A549 (cell line): ENCODE measurements at regions of chr7 and their contacts with region 1.

Region 1: GRCh38 chr7:149662591-149663095 is 110.7 kb downstream of the ZNF467 start:
- DNase-seq: peak; percentile 33 to 83
- ATAC-seq: peak; percentile 96 to 99
- H3K4me3 ChIP-seq: no peak overlapping the region
- H3K27ac ChIP-seq: no peak overlapping the region
- H3K4me1 ChIP-seq: 0 out of 3 replicates have a peak, but pooled peaks cover 2% of the 10 kb centered on the region
- CTCF ChIP-seq: peak; percentile 53
- EP300 ChIP-seq: no peak
- POLR2A ChIP-seq: no peak
- RAD21 ChIP-seq: peak; percentile 64 to 79

Region 2: DNA sequence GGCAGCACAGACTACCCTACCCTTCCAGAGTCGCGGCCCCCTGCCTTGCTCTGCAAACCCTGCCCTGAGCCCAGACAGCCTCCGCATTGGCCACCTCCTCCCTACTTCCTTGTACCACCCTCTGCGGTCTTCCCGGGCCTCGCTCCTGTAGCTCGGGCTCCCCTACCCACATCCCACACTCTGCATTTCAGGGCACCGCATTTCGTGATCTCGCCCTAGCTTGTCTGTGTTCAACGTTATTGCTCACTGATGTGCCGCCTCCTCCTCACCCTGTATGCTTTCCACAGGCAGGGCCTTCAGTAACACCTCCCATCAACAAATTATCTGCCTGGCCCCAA is 640.9 kb before region 1 on chr7:
- CTCF ChIA-PET with region 1: no interaction called
- POLR2A ChIA-PET with region 1: no interaction called
- DNase-seq: no peak
- ATAC-seq: no peak
- H3K4me3 ChIP-seq: no peak overlapping the region
- H3K27ac ChIP-seq: no peak overlapping the region
- H3K4me1 ChIP-seq: peaks cover 6% of the 10 kb centered on the region
- CTCF ChIP-seq: no peak
- EP300 ChIP-seq: no peak
- POLR2A ChIP-seq: no peak
- RAD21 ChIP-seq: no peak

Region 3: GRCh38 chr7:149624419-149625339 is 38.0 kb before region 1 on chr7:
- CTCF ChIA-PET with region 1: interaction called, 12 read pairs
- POLR2A ChIA-PET with region 1: no interaction called
- DNase-seq: peak; percentile 74 to 94
- ATAC-seq: peak; percentile 93 to 97
- H3K4me3 ChIP-seq: peak overlapping the region; percentile 98
- H3K27ac ChIP-seq: peak overlapping the region; percentile 94 to 97
- H3K4me1 ChIP-seq: peaks cover 12% of the 10 kb centered on the region
- CTCF ChIP-seq: peak; percentile 81
- EP300 ChIP-seq: no peak
- POLR2A ChIP-seq: peak; percentile 78
- RAD21 ChIP-seq: no peak; a peak in 1 of 5 replicates

Region 4: DNA sequence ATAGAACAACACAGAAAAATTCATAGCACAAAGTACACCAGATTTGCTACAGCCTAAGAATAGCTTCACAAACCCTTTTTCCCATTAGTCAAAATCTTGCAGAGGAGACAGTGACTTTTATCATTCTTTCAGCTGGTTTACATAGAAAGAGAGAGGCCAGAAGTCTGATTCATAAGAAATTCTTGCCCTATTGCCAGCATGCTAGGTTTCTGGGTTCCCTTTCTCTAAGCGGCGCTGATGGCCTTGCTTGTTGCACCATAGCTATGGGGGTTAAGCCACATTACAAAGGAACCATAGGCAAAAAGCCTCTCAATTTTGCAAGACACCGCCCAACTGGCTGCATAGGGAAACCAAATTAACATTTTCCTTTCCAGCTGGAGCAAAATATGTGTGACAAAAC is 23.4 kb after region 1 on chr7:
- CTCF ChIA-PET with region 1: interaction called, 27 read pairs
- POLR2A ChIA-PET with region 1: no interaction called
- DNase-seq: no peak
- ATAC-seq: no peak
- H3K4me3 ChIP-seq: no peak overlapping the region
- H3K27ac ChIP-seq: no peak overlapping the region
- H3K4me1 ChIP-seq: peaks cover 6% of the 10 kb centered on the region; the same call in 2 of the 3 replicates
- CTCF ChIP-seq: no peak
- EP300 ChIP-seq: no peak
- POLR2A ChIP-seq: no peak
- RAD21 ChIP-seq: no peak

Region 5: DNA sequence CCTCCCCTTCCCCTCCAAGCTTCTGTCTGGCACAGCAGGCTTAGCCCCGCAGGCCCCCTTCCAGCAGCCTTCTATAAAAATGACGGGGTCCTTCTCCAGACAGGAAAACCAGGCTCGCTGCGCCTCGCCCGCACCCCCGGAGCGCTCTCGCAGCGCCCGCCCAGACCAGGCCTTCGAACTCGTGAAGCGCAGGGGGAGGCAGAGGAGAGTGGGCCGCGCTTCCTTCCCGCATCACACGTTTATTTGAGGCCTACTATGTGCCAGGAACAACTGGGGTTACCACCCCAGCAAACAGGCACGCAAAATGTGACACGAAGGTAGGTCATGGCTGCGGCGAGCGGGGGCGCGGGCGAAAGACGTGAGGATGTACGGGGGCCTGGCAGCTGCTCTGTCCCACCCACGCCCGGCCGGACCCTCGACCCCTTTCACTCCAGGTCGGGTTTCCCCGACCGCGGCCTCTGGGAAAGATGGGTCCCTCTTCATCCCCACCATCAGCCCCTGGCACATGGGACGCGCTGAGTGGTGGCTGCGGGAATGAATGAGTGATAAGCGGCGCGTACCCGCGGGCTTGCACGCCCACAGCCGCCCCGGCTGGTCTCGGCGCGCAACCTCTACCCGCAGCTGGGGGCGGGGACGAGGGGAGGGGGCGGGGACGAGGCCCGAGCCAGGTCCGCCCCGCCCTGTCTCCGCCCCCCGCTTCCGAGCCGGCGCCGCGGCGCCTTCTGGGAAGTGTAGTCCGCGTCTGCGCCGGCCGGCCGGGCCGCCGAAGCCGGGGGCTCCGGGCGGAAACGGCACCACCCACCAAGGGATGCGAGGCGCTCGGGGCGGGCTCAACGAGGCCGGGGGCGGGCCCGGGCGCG is 51.6 kb after region 1 on chr7:
- CTCF ChIA-PET with region 1: interaction called, 12 read pairs
- POLR2A ChIA-PET with region 1: no interaction called
- DNase-seq: peak; percentile 66 to 83
- ATAC-seq: peak; percentile 84 to 92
- H3K4me3 ChIP-seq: peak overlapping the region; percentile 61
- H3K27ac ChIP-seq: peak overlapping the region; percentile 69 to 89
- H3K4me1 ChIP-seq: peaks cover 13% of the 10 kb centered on the region
- CTCF ChIP-seq: no peak
- EP300 ChIP-seq: no peak
- POLR2A ChIP-seq: peak; percentile 74
- RAD21 ChIP-seq: no peak

Region 6: GRCh38 chr7:149753401-149754233 is 91.0 kb after region 1 on chr7:
- CTCF ChIA-PET with region 1: interaction called, 13 read pairs
- POLR2A ChIA-PET with region 1: no interaction called
- DNase-seq: peak; percentile 65 to 73
- ATAC-seq: peak; percentile 87 to 95
- H3K4me3 ChIP-seq: no peak overlapping the region
- H3K27ac ChIP-seq: no peak overlapping the region
- H3K4me1 ChIP-seq: 0 out of 3 replicates have a peak, but pooled peaks cover under 1% of the 10 kb centered on the region
- CTCF ChIP-seq: peak; percentile 68
- EP300 ChIP-seq: no peak
- POLR2A ChIP-seq: no peak
- RAD21 ChIP-seq: peak; percentile 61 to 79